Activated B cell treated with CpG ODN at 0.5 μM for 24 hours (primary cell): ENCODE measurements at regions of chr21 and their contacts with region 1.

Region 1: DNA sequence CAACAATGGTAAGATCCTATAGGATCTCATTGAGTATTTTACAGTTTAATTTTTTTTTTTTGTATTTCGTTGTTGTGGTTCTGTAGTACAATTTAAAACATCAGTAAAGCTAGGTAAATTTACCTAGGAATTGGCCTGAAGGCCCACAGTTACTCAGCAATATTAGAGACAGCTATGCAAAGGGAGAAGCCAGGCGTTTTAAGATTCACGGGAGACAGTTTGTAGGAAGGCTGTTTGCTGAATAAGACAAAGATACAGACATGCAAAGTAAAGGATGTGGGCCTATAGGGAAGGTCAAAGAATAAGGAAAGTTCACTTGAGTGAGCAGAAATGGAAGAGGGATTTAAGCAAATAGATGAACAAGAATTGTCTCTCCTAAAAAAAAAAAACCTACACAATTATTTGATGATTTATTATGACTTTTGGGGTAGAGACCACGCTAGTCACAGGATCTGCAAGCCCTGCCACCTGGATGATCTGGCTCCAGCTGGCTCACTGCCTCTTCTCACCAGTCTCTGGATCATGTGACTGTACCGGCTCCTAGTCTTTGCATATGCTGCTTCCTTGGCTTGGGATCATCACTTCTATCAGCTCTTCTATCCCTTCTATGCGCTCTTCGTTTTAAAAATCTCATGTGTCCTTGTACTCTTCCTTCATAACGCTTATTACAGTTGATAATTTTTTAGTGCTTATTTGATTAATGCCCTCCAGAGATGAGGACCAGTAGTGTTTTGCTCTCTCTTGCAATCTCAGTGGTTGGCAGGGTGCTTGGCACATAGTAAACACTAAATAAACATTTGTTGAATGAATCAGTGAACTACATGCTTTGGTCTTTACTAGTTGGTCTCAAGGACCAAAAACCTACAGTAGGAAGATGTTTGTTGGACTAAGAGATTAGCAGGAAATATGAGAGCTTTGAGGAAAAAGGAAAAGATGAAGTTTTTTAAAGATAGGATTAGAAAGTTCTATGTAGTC is 14.1 kb downstream of the DYRK1A start:
- DNase-seq: no peak
- ATAC-seq: no peak
- H3K4me3 Mint-ChIP-seq: no peak overlapping the region
- H3K27ac Mint-ChIP-seq: no peak overlapping the region
- H3K4me1 Mint-ChIP-seq: peaks cover 88% of the 10 kb centered on the region
- H3K27me3 Mint-ChIP-seq: no peaks in the 10 kb centered on the region
- CTCF ChIP-seq: no peak

Region 2: GRCh38 chr21:36337099-36337509 is 1043.5 kb before region 1 on chr21:
- CTCF ChIA-PET with region 1: no interaction called
- POLR2A ChIA-PET with region 1: no interaction called
- intact Hi-C with region 1: no loop called
- DNase-seq: no peak
- ATAC-seq: no peak
- H3K4me3 Mint-ChIP-seq: no peak overlapping the region
- H3K27ac Mint-ChIP-seq: no peak overlapping the region
- H3K4me1 Mint-ChIP-seq: peaks cover 7% of the 10 kb centered on the region
- H3K27me3 Mint-ChIP-seq: no peaks in the 10 kb centered on the region
- CTCF ChIP-seq: no peak

Region 3: GRCh38 chr21:37398697-37399096 is 18.1 kb after region 1 on chr21:
- CTCF ChIA-PET with region 1: no interaction called
- POLR2A ChIA-PET with region 1: no interaction called
- intact Hi-C with region 1: loop called (anchors 2 kb)
- DNase-seq: no peak
- ATAC-seq: no peak
- H3K4me3 Mint-ChIP-seq: no peak overlapping the region
- H3K27ac Mint-ChIP-seq: no peak overlapping the region
- H3K4me1 Mint-ChIP-seq: peaks cover 71% of the 10 kb centered on the region
- H3K27me3 Mint-ChIP-seq: no peaks in the 10 kb centered on the region
- CTCF ChIP-seq: no peak